Activated CD4-positive, alpha-beta memory T cell treated with anti-CD3 and anti-CD28 coated beads, Interleukin-2, amount 10 ng/mL, durations not matched to agents 7 days and 5 days (primary cell): ENCODE measurements at regions of chr4 and their contacts with region 1.

Region 1: DNA sequence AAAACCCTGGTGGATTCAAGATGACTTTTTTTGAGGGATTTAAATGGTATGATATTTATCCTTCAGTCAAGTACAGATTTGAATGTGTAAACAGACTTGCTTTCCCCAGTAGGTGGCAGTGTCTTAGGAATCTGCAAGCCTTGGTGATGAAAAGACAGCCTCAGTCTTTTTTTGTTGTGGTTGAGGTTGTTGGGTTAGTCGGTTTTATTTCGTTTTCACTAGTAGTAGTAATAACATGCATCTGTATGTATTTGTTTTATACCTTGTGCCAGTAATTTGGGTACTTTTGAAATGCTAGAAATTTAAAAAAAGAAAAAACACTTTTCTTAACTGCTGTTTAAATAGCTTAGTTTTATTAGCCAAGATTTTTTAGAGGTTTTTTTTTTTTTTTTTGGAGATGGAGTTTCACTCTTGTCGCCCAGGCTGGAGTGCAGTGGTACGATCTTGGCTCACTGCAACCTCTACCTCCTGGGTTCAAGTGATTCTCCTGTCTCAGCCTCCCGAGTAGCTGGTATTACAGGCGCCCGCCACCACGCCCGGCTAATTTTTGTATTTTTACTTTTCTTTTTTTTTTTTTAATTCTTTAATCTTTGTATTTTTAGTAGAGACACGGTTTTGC is 39.2 kb downstream of the COPS4 start:
- DNase-seq: peak; percentile 58
- H3K4me3 Mint-ChIP-seq: peak overlapping the region; percentile 19
- H3K27ac Mint-ChIP-seq: peak overlapping the region; percentile 17
- H3K4me1 Mint-ChIP-seq: peaks cover 22% of the 10 kb centered on the region
- H3K27me3 Mint-ChIP-seq: peaks cover 1% of the 10 kb centered on the region

Region 2: DNA sequence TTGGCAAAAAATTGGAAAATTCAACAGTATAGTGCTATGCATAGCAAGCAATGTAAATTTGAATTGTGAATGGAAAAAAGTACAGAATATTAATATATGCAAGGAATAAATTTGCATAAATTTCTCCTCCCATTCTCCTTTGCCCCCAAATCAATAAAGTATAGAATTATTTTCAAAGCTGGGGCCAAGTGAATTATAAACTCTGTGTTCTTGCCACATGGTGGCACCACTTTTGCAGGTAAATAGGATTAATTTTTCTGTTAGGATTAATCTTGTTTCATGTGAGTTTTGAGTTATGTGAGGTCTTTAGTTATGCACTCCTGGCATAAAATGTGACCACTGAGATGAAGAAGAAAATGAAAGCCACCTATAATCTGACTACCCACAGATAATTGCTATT is 19.3 kb before region 1 on chr4:
- CTCF ChIA-PET with region 1: interaction called, 25 read pairs
- POLR2A ChIA-PET with region 1: no interaction called
- DNase-seq: no peak
- H3K4me3 Mint-ChIP-seq: no peak overlapping the region
- H3K27ac Mint-ChIP-seq: no peak overlapping the region
- H3K4me1 Mint-ChIP-seq: no peaks in the 10 kb centered on the region
- H3K27me3 Mint-ChIP-seq: no peaks in the 10 kb centered on the region

Region 3: DNA sequence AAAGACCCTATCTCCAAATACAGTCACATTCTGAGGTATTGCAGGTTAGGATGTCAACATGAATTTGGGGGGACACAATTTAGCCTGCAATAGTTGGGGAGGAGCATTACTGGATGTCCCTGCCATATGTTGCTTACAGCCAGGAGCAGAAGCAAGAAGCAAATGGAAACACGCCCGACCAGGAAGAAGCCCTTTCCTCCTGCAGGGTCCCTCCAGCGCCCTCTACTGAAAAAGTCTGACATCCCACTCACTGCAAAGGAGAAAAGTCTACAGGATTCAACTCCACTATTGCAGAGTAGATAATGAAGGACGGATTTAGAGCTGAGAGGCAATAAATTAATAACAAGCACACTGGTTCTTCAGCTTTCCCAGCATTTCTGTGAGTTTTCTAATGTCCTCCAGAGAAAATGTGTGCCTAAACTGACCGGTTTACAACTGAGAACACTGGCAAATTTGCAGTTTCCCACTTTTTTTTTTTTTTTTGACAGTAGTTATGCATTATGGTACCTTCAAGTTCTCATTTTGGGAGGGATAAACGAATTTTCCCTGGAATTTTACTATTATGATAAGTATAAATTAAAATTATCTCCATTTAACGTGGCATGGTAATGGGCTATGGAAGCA is 178.7 kb after region 1 on chr4:
- CTCF ChIA-PET with region 1: interaction called, 34 read pairs
- POLR2A ChIA-PET with region 1: no interaction called
- DNase-seq: peak; percentile 77
- H3K4me3 Mint-ChIP-seq: no peak overlapping the region
- H3K27ac Mint-ChIP-seq: no peak overlapping the region
- H3K4me1 Mint-ChIP-seq: peaks cover 21% of the 10 kb centered on the region
- H3K27me3 Mint-ChIP-seq: peaks cover 16% of the 10 kb centered on the region

Region 4: DNA sequence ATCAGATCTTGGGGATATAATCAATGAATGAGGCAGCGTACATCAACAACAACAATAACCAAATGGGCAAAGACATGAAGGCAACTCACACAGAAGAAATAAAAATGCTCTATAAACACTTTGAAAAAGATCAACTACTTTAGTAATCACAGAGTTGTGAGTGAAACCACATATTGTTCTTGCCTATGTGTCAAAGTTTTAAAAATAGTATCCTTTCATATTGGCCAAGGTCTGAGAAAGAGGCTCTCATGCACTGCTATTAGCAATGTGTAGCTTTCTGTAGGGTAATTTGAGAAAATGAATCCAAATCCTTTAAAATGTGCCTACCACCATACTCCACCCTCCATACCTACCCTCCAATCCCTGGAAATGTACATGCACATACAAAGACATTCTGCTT is 185.4 kb after region 1 on chr4:
- CTCF ChIA-PET with region 1: interaction called, 56 read pairs
- POLR2A ChIA-PET with region 1: interaction called, 4 read pairs
- DNase-seq: no peak
- H3K4me3 Mint-ChIP-seq: no peak overlapping the region
- H3K27ac Mint-ChIP-seq: no peak overlapping the region
- H3K4me1 Mint-ChIP-seq: peaks cover 5% of the 10 kb centered on the region
- H3K27me3 Mint-ChIP-seq: no peaks in the 10 kb centered on the region

Region 5: GRCh38 chr4:83267121-83267829 is 193.1 kb after region 1 on chr4:
- CTCF ChIA-PET with region 1: interaction called, 56 read pairs
- POLR2A ChIA-PET with region 1: interaction called, 5 read pairs
- DNase-seq: no peak
- H3K4me3 Mint-ChIP-seq: no peak overlapping the region
- H3K27ac Mint-ChIP-seq: no peak overlapping the region
- H3K4me1 Mint-ChIP-seq: peaks cover 24% of the 10 kb centered on the region
- H3K27me3 Mint-ChIP-seq: no peaks in the 10 kb centered on the region